Dorsolateral prefrontal cortex (tissue), 120 donors: ENCODE measurements at regions of chr15 and their contacts with region 1.

Region 1: DNA sequence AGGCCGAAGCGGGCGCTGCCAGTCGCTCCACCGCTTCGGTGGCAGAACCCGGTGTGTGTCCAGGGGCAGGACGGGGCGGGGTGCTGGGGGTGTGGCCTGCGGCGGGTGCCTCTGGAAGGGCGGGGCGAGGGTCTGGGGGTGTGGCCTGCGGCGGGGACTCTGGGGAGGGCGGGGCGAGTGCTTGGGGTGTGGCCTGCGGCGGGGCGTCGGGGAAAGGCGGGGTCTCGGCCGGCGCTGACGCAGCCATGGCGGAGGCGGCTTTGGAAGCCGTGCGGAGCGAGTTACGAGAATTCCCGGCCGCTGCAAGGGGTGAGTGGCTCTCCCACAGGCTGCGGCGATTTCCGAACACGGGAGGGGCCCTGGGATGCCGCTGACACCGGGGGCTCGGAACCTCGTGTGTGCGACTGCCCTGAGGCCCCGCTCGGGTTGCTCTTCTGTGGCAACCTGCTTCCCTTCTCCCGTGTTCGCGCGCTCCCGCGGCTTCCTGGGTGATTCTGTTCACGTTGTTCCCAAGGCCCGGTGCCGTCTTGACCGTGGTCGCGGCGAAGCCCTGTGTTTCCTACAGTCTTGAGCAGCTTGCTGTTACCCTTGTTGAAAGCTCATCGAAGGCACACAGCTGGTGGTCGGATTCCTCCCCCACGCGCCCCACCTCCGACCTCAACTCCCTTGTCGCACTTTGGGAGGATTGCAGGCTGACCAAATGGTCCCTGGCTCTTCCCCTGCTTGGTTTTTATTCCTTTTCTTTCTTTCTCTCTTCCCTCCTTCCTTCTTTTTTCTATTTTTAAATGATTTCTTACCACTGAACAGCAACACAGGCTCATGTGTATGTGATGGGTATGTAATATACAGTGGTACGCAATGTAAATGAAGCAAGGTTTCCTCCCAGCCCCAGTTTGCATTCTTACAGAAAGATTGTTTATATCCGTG is at the start of gene JMJD7:
- DNase-seq: peak; percentile 84 to 97 (median 92)
- H3K4me3 ChIP-seq: peak within 1 kb of the TSS; percentile 58 to 99 (median 87)
- H3K27ac ChIP-seq: peak within 1 kb of the TSS; percentile 55 to 95 (median 84)
- H3K27me3 ChIP-seq: no peaks in the 10 kb centered on the region
- CTCF ChIP-seq: peak in 13 of 56 donors; percentile 6 to 44 (median 21)
- total RNA-seq, gene JMJD7: 13.4 to 55.9 (median 25.6) TPM

Region 2: GRCh38 chr15:41746802-41747201 is 81.3 kb before region 1 on chr15:
- intact Hi-C with region 1: no loop called
- DNase-seq: no peak
- H3K4me3 ChIP-seq: no peak overlapping the region
- H3K27ac ChIP-seq: peak overlapping the region in 2 of 59 donors; percentile 20 to 34
- H3K27me3 ChIP-seq: no peaks in the 10 kb centered on the region
- CTCF ChIP-seq: no peak

Region 3: GRCh38 chr15:41870689-41871081 is 42.5 kb after region 1 on chr15:
- intact Hi-C with region 1: no loop called
- DNase-seq: peak in 4 of 10 donors; percentile 22 to 68 (median 43)
- H3K4me3 ChIP-seq: no peak overlapping the region
- H3K27ac ChIP-seq: peak overlapping the region in 1 of 59 donors; percentile 47
- H3K27me3 ChIP-seq: no peaks in the 10 kb centered on the region
- CTCF ChIP-seq: no peak

Region 4: GRCh38 chr15:41894791-41895463 is 66.8 kb after region 1 on chr15:
- intact Hi-C with region 1: loop called in 1 of 2 experiments (anchors 5 kb)
- DNase-seq: peak in 7 of 10 donors; percentile 35 to 72 (median 57)
- H3K4me3 ChIP-seq: peak overlapping the region in 28 of 59 donors; percentile 0 to 40 (median 19)
- H3K27ac ChIP-seq: peak overlapping the region in 22 of 59 donors; percentile 4 to 69 (median 33)
- H3K27me3 ChIP-seq: no peaks in the 10 kb centered on the region
- CTCF ChIP-seq: no peak